A549 (cell line): ENCODE measurements at regions of chr9 and their contacts with region 1.

Region 1: DNA sequence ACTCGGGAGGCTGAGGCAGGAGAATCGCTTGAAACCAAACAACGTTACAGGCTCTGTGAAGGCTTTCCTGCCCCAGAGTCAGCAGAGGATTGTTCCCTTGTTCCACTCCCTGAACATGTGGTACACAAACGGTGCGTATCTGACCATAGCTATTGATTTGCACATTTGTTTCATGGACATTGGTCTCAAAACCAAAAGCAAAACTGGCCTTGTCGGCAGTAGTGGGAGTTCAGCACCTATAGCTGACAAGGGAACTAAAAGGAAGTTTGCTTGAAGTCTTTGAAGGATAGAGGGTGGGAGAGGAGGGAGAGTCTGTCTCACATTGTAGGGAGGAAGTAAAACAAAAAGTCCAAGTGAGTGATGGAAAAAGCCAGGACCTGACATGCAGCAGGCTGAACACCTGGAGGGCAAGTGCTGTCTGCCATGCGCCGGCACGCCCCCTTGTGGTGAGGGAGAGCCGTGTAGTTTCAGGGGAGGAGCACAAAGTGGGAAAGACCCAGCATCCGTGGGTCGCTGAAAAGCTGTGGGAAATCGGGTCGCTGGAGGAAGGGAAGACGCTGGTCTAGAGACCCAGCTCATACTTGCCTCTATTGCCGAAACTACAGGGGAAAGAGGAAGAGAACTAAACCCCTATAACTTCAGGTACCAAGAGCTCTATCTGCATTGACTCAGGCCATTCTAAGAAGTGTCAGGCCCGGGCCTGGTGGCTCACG is 58.0 kb downstream of the RAD23B start:
- DNase-seq: peak; percentile 74 to 75
- ATAC-seq: peak; percentile 81 to 86
- H3K4me3 ChIP-seq: no peak overlapping the region
- H3K27ac ChIP-seq: no peak overlapping the region
- H3K4me1 ChIP-seq: no peaks in the 10 kb centered on the region
- CTCF ChIP-seq: peak; percentile 79
- EP300 ChIP-seq: no peak
- POLR2A ChIP-seq: no peak
- RAD21 ChIP-seq: peak; percentile 71 to 77

Region 2: GRCh38 chr9:107137495-107138202 is 203.4 kb before region 1 on chr9:
- CTCF ChIA-PET with region 1: interaction called, 19 read pairs
- POLR2A ChIA-PET with region 1: no interaction called
- DNase-seq: peak; percentile 32 to 48
- ATAC-seq: peak; percentile 44 to 83; a peak in 4 of 6 replicates
- H3K4me3 ChIP-seq: no peak overlapping the region
- H3K27ac ChIP-seq: no peak overlapping the region
- H3K4me1 ChIP-seq: no peaks in the 10 kb centered on the region
- CTCF ChIP-seq: peak; percentile 72
- EP300 ChIP-seq: no peak
- POLR2A ChIP-seq: no peak
- RAD21 ChIP-seq: peak; percentile 61 to 70

Region 3: DNA sequence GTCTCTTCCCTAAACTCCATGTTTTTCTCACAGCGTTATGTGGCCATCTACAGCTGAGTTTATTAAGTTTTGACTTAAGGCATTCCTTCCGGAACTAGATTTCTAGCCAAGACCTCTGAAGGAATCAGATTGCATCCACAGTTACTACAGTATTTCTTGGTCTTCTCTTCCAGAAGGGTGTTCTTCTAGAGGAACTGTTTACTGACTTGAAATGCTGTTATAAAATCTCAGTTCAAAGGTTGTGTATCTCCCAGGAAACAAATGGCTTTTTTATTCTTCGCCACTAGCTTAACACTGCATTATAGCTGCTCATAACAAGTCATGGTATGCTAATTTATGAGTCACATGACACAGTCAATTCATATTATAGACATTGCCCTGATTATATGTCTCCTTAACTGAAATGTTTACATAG is 113.3 kb before region 1 on chr9:
- CTCF ChIA-PET with region 1: interaction called, 11 read pairs
- POLR2A ChIA-PET with region 1: no interaction called
- DNase-seq: no peak
- ATAC-seq: no peak; a peak in 1 of 6 replicates
- H3K4me3 ChIP-seq: no peak overlapping the region
- H3K27ac ChIP-seq: no peak overlapping the region
- H3K4me1 ChIP-seq: no peaks in the 10 kb centered on the region
- CTCF ChIP-seq: no peak
- EP300 ChIP-seq: no peak
- POLR2A ChIP-seq: no peak
- RAD21 ChIP-seq: no peak

Region 4: GRCh38 chr9:107269681-107270080 is 71.4 kb before region 1 on chr9:
- CTCF ChIA-PET with region 1: interaction called, 14 read pairs
- POLR2A ChIA-PET with region 1: no interaction called
- DNase-seq: no peak
- ATAC-seq: no peak
- H3K4me3 ChIP-seq: no peak overlapping the region
- H3K27ac ChIP-seq: peak overlapping the region; percentile 9 to 68
- H3K4me1 ChIP-seq: peaks cover 43% of the 10 kb centered on the region
- CTCF ChIP-seq: no peak
- EP300 ChIP-seq: no peak
- POLR2A ChIP-seq: no peak
- RAD21 ChIP-seq: no peak

Region 5: DNA sequence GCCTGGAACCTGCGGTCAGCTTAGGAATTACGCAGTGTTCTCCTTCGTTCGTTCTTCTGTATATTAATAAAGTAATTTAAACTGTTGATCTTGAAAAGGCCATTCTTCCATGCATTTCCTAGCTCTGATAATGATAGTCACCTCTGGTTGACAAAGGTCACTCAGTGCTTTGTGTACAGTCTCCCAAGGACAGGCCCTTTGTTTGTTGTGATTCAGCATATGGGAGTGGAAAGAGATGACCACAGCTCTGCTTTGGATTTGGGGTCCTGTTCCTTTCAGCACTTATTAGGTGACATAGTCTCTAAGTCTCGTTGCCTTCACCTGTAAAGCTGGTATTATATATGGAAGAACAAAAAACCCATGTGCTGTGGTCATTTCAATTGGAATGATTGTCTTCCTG is 18.4 kb before region 1 on chr9:
- CTCF ChIA-PET with region 1: interaction called, 34 read pairs
- POLR2A ChIA-PET with region 1: no interaction called
- DNase-seq: no peak
- ATAC-seq: no peak
- H3K4me3 ChIP-seq: no peak overlapping the region
- H3K27ac ChIP-seq: no peak overlapping the region
- H3K4me1 ChIP-seq: no peaks in the 10 kb centered on the region
- CTCF ChIP-seq: no peak
- EP300 ChIP-seq: no peak
- POLR2A ChIP-seq: no peak
- RAD21 ChIP-seq: no peak

Region 6: GRCh38 chr9:107363516-107364152 is 22.6 kb after region 1 on chr9:
- CTCF ChIA-PET with region 1: interaction called, 14 read pairs
- POLR2A ChIA-PET with region 1: no interaction called
- DNase-seq: no peak
- ATAC-seq: no peak
- H3K4me3 ChIP-seq: no peak overlapping the region
- H3K27ac ChIP-seq: no peak overlapping the region
- H3K4me1 ChIP-seq: no peaks in the 10 kb centered on the region
- CTCF ChIP-seq: no peak
- EP300 ChIP-seq: no peak
- POLR2A ChIP-seq: no peak
- RAD21 ChIP-seq: no peak